CD4-positive, alpha-beta memory T cell (primary cell): ENCODE measurements at regions of chr2 and their contacts with region 1.

Region 1: DNA sequence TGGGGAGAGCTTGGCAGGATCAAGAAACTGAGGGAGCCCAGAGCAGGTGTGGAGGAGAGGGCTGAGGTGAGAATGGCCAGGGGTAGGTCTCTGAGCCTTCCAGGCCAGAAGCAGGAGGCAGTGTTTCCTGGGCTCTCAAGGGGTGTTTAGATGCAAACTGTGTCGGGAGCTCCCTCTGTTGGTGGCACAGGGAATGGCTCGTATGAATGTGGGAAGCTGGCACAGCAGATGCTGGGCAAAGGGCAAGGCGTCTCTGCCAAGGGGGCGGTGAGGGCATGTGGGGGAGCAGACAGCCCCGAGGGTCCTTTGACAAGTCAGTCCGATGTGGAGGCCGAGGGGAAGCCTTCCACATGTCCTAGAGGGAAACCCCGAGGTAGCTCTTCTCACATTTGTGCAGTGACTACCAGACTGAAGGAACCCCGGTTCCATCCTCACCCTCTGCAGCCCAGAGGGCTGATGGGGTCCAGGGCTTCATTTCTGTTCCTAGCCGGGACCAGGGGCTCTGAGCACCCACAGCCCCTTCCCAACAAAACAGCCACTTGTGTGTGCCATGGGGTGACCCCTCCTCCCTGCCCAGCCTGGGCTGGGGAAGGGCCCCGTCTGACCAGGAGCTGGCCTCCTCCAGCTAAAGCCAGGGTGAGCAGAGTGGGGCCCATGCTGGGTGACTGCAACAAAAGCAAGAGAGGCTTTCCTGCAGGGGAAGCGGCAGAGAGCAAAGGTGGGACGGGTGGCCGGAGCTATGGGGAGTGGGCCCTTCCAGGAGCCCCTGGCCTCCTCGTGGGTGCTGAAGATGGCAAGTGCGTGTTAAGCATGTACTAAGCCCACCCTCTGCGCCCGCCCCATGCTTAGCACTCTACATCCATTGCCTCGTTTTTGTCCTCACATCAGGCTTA is 103.4 kb downstream of the SEPTIN10 start:
- DNase-seq: peak; percentile 65 to 71 (median 68)
- H3K4me3 ChIP-seq: no peak overlapping the region
- H3K4me3 Mint-ChIP-seq: no peak overlapping the region
- H3K27ac ChIP-seq: no peak overlapping the region
- H3K27ac Mint-ChIP-seq: peak overlapping the region in 1 of 7 donors; percentile 44
- H3K4me1 ChIP-seq: no peaks in the 10 kb centered on the region
- H3K4me1 Mint-ChIP-seq: peaks cover 0 to 11% (median 5%) of the 10 kb centered on the region in 4 donors
- H3K27me3 ChIP-seq: no peaks in the 10 kb centered on the region
- H3K27me3 Mint-ChIP-seq: no peaks in the 10 kb centered on the region

Region 2: DNA sequence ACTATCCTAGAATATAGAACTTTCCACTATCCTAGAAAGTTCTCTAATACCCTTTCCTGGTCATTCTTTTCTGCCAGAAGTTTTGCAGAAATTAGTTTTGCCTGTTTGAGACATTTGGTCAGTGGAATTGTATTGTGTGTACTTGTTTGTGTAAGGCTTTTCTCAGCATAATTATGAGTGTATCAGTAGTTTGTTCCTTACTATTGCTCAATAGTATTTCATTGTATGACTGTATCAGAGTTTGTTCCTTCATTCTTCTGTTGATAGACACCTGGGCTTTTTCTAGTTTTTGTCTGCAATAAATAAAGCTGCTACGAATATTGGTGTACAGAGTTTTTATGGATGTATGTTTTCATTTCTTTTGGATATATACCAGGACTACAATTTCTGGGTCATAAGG is 696.6 kb before region 1 on chr2:
- CTCF ChIA-PET with region 1: no interaction called
- POLR2A ChIA-PET with region 1: no interaction called
- intact Hi-C with region 1: no loop called
- DNase-seq: no peak
- H3K4me3 ChIP-seq: no peak overlapping the region
- H3K4me3 Mint-ChIP-seq: no peak overlapping the region
- H3K27ac ChIP-seq: no peak overlapping the region
- H3K27ac Mint-ChIP-seq: peak overlapping the region in 1 of 7 donors; percentile 13
- H3K4me1 ChIP-seq: no peaks in the 10 kb centered on the region
- H3K4me1 Mint-ChIP-seq: peaks cover 0 to 2% (median under 1%) of the 10 kb centered on the region in 4 donors
- H3K27me3 ChIP-seq: no peaks in the 10 kb centered on the region
- H3K27me3 Mint-ChIP-seq: no peaks in the 10 kb centered on the region

Region 3: DNA sequence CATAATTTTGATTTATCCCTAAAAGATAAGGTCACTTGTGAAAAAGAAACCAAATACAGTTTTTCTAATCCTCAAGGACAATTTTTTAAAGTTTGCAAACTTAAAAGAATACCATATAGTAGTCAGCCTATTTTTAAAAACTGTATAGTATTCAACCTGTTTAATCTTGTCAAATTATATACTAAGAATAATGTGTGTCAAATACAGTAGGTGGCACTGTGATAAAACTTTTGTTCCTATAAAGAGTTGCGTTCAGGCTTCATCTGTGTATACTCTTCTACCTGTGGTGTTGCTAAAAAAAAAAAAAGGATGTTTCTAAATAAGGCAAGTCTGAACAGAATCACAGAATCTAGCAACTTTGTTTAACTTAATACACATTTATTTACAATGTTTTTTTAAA is 655.2 kb before region 1 on chr2:
- CTCF ChIA-PET with region 1: interaction called, 32 read pairs
- POLR2A ChIA-PET with region 1: no interaction called
- intact Hi-C with region 1: no loop called
- DNase-seq: peak in 4 of 5 donors; percentile 26 to 38 (median 34)
- H3K4me3 ChIP-seq: no peak overlapping the region
- H3K4me3 Mint-ChIP-seq: no peak overlapping the region
- H3K27ac ChIP-seq: no peak overlapping the region
- H3K27ac Mint-ChIP-seq: peak overlapping the region in 1 of 7 donors; percentile 13
- H3K4me1 ChIP-seq: no peaks in the 10 kb centered on the region
- H3K4me1 Mint-ChIP-seq: peaks cover 0 to 2% (median 0%) of the 10 kb centered on the region in 4 donors
- H3K27me3 ChIP-seq: no peaks in the 10 kb centered on the region
- H3K27me3 Mint-ChIP-seq: no peaks in the 10 kb centered on the region

Region 4: DNA sequence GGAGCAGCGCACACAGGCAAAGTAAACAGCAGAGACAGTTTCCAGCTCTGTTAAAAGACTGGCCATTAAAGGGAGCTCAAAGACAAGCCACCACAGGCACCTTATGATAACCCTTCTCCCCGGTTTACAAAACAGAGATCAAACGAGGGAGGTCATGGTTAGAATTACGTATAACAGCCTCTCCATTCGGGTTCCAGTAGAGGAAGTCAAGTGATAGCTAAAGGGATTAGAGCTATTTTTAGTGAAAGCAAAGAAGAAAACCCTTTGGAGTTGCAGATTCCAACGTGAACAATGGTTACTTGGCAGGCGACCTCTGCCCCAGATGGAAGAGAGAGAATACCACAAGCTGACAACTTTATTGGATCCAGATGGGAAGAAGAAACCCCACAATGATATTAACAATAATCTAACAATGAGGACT is 490.2 kb before region 1 on chr2:
- CTCF ChIA-PET with region 1: interaction called, 3 read pairs
- POLR2A ChIA-PET with region 1: no interaction called
- intact Hi-C with region 1: loop called (anchors 1 kb)
- DNase-seq: peak in 4 of 5 donors; percentile 36 to 50 (median 46)
- H3K4me3 ChIP-seq: no peak overlapping the region
- H3K4me3 Mint-ChIP-seq: peak overlapping the region in 4 of 8 donors; percentile 3 to 57 (median 41)
- H3K27ac ChIP-seq: no peak overlapping the region
- H3K27ac Mint-ChIP-seq: peak overlapping the region in 5 of 7 donors; percentile 1 to 76 (median 38)
- H3K4me1 ChIP-seq: peaks cover 11% of the 10 kb centered on the region
- H3K4me1 Mint-ChIP-seq: peaks cover 11 to 24% (median 15%) of the 10 kb centered on the region in 4 donors
- H3K27me3 ChIP-seq: no peaks in the 10 kb centered on the region
- H3K27me3 Mint-ChIP-seq: no peaks in the 10 kb centered on the region

Region 5: GRCh38 chr2:109312892-109313291 is 197.5 kb before region 1 on chr2:
- CTCF ChIA-PET with region 1: no interaction called
- POLR2A ChIA-PET with region 1: no interaction called
- intact Hi-C with region 1: loop called (anchors 5 kb)
- DNase-seq: no peak
- H3K4me3 ChIP-seq: no peak overlapping the region
- H3K4me3 Mint-ChIP-seq: no peak overlapping the region
- H3K27ac ChIP-seq: no peak overlapping the region
- H3K27ac Mint-ChIP-seq: no peak overlapping the region
- H3K4me1 ChIP-seq: no peaks in the 10 kb centered on the region
- H3K4me1 Mint-ChIP-seq: no peaks in the 10 kb centered on the region
- H3K27me3 ChIP-seq: no peaks in the 10 kb centered on the region
- H3K27me3 Mint-ChIP-seq: peaks cover 0 to 7% of the 10 kb centered on the region in 2 donors

Region 6: GRCh38 chr2:109448946-109449788 is 61.2 kb before region 1 on chr2:
- CTCF ChIA-PET with region 1: no interaction called
- POLR2A ChIA-PET with region 1: no interaction called
- intact Hi-C with region 1: no loop called
- DNase-seq: no peak
- H3K4me3 ChIP-seq: no peak overlapping the region
- H3K4me3 Mint-ChIP-seq: no peak overlapping the region
- H3K27ac ChIP-seq: no peak overlapping the region
- H3K27ac Mint-ChIP-seq: no peak overlapping the region
- H3K4me1 ChIP-seq: no peaks in the 10 kb centered on the region
- H3K4me1 Mint-ChIP-seq: no peaks in the 10 kb centered on the region
- H3K27me3 ChIP-seq: no peaks in the 10 kb centered on the region
- H3K27me3 Mint-ChIP-seq: peaks cover 0 to 4% of the 10 kb centered on the region in 2 donors